ENCODE measurements at regions of chr11 and their contacts with region 1.

Region 1: DNA sequence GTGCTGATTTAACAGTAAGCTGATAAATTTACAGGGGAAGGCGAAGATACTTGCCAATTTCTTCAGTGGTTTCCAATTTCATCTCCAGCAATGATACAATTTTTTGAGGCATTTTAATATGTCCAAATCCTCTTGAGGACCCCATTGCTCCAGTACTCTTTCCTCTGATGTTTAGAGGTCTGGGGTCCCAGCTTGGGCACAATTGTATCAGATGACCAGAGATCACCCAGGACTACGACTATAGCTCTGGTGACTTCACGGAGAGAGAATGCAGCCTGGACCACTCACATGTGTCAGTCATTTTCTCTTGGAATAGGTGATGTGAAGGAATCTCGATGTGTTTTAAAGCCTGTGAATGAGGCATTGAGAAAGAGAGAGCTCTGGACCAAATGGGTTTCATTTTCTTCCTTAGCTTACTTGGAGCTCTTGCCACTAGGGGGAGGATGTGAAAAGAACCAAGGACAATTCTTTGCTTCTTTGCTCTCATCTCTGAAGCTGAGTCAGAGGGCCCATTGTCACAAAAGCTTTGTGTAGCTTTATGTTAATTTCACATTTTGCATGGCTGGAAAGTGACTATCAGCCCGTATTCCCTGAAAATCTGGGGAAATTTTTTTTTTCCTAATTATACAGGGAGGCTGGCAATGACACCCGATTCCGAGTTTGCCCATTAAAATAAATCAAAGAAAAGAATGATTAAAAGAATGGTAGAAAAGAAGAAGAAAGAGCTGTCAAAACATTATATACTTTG is 6.7 kb upstream of the CCDC90B start:
- DNase-seq: peak; percentile 60 to 67
- ATAC-seq: peak; percentile 87 to 93
- H3K4me3 ChIP-seq: no peak overlapping the region
- H3K27ac ChIP-seq: no peak overlapping the region
- H3K4me1 ChIP-seq: no peaks in the 10 kb centered on the region
- CTCF ChIP-seq: peak; percentile 71
- EP300 ChIP-seq: no peak
- POLR2A ChIP-seq: no peak
- RAD21 ChIP-seq: peak; percentile 51 to 58

Region 2: GRCh38 chr11:83249972-83250593 is 42.8 kb before region 1 on chr11:
- CTCF ChIA-PET with region 1: interaction called, 11 read pairs
- POLR2A ChIA-PET with region 1: no interaction called
- DNase-seq: peak; percentile 36 to 58
- ATAC-seq: peak; percentile 79 to 93; a peak in 4 of 6 replicates
- H3K4me3 ChIP-seq: no peak overlapping the region
- H3K27ac ChIP-seq: no peak overlapping the region
- H3K4me1 ChIP-seq: no peaks in the 10 kb centered on the region
- CTCF ChIP-seq: peak; percentile 77
- EP300 ChIP-seq: no peak
- POLR2A ChIP-seq: no peak
- RAD21 ChIP-seq: peak; percentile 65 to 66

Region 3: DNA sequence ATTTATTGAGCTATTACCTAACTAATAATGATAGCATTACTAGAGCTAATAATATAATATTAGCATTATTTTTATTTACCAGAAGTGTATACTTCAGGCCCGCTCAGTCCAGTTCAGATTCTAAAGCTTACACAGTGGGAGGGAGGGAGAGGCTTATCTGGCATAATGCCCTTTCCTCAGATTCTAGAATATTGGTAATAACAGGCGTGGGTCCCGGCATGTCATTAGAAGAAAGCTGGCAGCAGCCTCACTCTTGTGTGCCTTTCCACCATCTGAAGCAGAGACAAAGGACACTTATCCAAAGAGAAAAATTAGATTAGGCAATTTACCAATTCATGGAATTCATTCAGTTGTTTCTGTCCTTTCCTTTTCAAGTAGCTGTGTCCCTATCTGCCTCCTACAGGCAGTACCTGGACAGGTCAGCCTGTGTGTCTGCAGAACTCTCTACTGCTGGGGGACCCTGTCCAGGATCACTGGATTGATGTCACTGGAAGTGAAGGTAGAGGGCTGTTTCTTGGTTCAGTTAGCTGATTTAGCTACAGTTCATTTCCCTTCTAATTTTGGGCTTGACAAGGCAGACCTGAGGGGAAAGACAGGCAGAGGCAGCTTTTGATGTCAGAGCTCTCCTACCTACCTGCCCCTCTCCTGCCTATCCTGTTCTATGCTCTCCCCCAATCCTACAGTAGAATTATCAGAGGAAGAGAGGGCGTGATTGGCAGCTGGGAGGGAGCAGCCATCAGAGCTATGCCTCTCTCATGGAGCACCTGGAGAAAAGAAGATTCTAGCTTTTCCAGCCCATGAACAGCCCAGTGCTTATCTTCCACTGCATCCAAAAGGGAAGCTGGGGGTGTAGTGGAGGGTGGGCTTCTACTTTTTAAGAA is 13.6 kb after region 1 on chr11:
- CTCF ChIA-PET with region 1: interaction called, 19 read pairs
- POLR2A ChIA-PET with region 1: no interaction called
- DNase-seq: no peak
- ATAC-seq: no peak
- H3K4me3 ChIP-seq: no peak overlapping the region
- H3K27ac ChIP-seq: no peak overlapping the region
- H3K4me1 ChIP-seq: no peaks in the 10 kb centered on the region
- CTCF ChIP-seq: no peak
- EP300 ChIP-seq: no peak
- POLR2A ChIP-seq: no peak
- RAD21 ChIP-seq: no peak

Region 4: DNA sequence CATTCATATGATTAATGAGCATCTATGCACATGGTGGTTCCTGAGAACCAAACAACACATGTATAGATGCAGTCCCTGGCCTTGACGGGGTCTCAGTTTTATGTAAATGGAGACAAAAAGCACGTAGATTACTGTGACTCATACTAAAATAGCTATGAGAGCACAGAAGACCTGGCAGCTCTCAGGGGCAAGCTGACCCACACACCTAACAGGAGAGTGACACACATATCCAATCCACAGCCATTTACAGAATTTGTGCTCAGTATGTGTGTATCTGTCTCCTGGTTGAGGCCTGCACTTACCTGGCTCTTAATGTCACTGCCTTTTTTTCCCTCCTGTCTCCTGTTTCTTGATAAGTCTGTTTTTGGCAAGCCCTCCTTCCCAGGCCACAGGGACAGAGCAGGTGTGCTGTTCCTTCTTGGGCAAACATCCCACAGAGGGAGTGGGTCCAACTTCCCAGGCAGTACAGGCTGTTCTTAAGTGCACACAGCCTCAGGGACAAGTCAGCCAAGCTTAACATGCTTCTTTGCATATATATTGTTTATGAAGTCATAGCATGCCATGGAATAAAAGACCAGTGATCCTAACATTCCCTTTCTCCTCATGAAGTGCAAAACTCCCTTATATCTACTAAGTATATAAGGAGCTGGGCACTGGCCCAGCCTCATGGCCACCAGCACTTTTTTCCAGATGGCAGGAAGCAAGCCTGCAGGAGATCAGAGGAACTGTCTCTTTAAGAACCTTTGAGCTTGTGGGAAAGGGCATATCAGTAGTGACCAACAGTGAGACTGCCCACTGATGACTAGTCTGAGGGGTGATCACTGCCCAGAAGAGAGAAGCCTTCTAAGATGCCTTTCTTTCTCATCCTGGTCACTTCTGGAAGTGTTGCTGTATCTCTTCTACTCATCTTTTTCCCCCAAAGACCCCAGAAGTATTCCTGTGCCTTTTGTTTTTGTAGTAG is 118.0 kb after region 1 on chr11:
- CTCF ChIA-PET with region 1: no interaction called
- POLR2A ChIA-PET with region 1: no interaction called
- DNase-seq: no peak
- ATAC-seq: 0 out of 6 replicates have a peak, but pooled peaks of 1 of the 2 experiments have one; percentile 24
- H3K4me3 ChIP-seq: no peak overlapping the region
- H3K27ac ChIP-seq: no peak overlapping the region
- H3K4me1 ChIP-seq: no peaks in the 10 kb centered on the region
- CTCF ChIP-seq: no peak
- EP300 ChIP-seq: no peak
- POLR2A ChIP-seq: no peak
- RAD21 ChIP-seq: no peak

Region 5: DNA sequence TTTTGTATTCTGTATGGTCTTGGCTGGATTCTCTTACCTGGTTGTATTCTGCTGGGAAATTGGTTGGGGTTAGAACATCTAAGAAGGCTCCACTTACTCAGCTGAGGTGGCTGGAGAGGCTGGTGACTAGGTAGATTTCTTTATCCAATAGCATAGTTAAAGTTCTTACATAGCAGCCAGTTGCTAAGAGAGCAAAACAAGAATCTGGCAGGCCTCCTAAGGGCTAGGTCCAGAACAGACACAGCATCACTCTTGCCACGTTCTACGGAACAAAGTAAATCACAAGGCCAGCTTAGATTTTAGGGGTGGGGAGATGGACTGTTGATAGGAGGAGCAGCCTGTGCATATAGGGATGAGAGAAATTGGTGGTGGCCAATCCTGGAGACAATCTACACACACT is 134.6 kb after region 1 on chr11:
- CTCF ChIA-PET with region 1: no interaction called
- POLR2A ChIA-PET with region 1: no interaction called
- DNase-seq: no peak
- ATAC-seq: no peak
- H3K4me3 ChIP-seq: no peak overlapping the region
- H3K27ac ChIP-seq: no peak overlapping the region
- H3K4me1 ChIP-seq: no peaks in the 10 kb centered on the region
- CTCF ChIP-seq: no peak
- EP300 ChIP-seq: no peak
- POLR2A ChIP-seq: no peak
- RAD21 ChIP-seq: no peak

Region 6: DNA sequence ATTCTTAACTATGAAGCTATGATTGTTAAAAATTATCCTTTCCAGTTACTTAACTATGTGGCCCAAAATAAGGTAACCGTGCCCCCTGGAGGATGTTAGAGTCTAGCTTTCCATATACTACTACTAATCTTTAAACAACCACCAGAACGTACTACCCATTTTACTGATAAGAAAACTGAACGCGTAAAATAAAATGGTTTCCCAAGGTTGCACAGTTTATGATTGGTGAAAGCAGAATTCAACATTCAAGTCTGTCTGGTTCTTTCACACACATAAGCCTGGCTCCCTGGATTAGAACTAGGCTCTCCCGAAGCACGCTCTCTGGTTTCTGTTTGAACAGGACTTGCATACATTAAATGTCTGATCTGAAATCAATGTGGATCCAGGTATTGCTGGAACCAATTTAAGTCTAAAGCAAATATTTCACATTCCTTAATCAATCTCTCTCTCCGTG is 431.2 kb after region 1 on chr11:
- CTCF ChIA-PET with region 1: interaction called, 12 read pairs
- POLR2A ChIA-PET with region 1: no interaction called
- DNase-seq: peak; percentile 10 to 69
- ATAC-seq: peak; percentile 75 to 89
- H3K4me3 ChIP-seq: peak overlapping the region; percentile 35
- H3K27ac ChIP-seq: no peak overlapping the region
- H3K4me1 ChIP-seq: no peaks in the 10 kb centered on the region; the same call in 2 of the 3 replicates
- CTCF ChIP-seq: peak; percentile 52
- EP300 ChIP-seq: no peak
- POLR2A ChIP-seq: no peak
- RAD21 ChIP-seq: peak; percentile 53 to 70; a peak in 4 of 5 replicates

Region 7: GRCh38 chr11:83819933-83820549 is 527.2 kb after region 1 on chr11:
- CTCF ChIA-PET with region 1: interaction called, 77 read pairs
- POLR2A ChIA-PET with region 1: no interaction called
- DNase-seq: peak; percentile 41 to 57
- ATAC-seq: peak; percentile 64 to 87; a peak in 5 of 6 replicates
- H3K4me3 ChIP-seq: no peak overlapping the region
- H3K27ac ChIP-seq: no peak overlapping the region
- H3K4me1 ChIP-seq: no peaks in the 10 kb centered on the region
- CTCF ChIP-seq: peak; percentile 86
- EP300 ChIP-seq: no peak
- POLR2A ChIP-seq: no peak
- RAD21 ChIP-seq: peak; percentile 85 to 86